Dendritic cell treated with granulocyte-macrophage colony-stimulating factor and Interleukin-4, amounts not matched to agents 40 ng/mL and 50 ng/mL, for 4 days (primary cell): ENCODE measurements at regions of chr21 and their contacts with region 1.

Region 1: GRCh38 chr21:44338971-44339910 is at the start of gene CFAP410:
- H3K4me3 Mint-ChIP-seq: peak within 1 kb of the TSS; percentile 85
- H3K27ac Mint-ChIP-seq: peak within 1 kb of the TSS; percentile 99
- H3K4me1 Mint-ChIP-seq: peaks cover 23% of the 10 kb centered on the region
- H3K27me3 Mint-ChIP-seq: peaks cover 6% of the 10 kb centered on the region

Region 2: DNA sequence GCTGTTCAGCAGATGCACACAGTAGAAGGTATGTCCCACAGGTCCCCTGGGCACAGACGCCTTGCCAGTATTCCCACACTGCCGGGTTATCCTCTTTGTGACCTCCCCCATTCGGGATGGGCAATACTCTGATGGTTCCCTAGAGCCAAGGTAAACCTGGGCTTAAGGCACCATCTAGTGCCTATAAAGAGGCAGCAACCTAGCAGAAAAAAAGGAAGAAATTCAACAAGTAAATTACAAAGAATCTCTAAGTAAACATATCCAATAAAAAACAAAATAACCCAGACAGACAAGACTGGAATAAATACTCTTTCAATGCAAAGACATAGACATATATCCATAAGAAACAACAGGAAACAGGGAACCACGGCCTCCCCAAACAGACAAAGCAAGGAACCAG is 719.4 kb before region 1 on chr21:
- intact Hi-C with region 1: no loop called
- H3K4me3 Mint-ChIP-seq: no peak overlapping the region
- H3K27ac Mint-ChIP-seq: no peak overlapping the region
- H3K4me1 Mint-ChIP-seq: no peaks in the 10 kb centered on the region
- H3K27me3 Mint-ChIP-seq: peaks cover 8% of the 10 kb centered on the region

Region 3: DNA sequence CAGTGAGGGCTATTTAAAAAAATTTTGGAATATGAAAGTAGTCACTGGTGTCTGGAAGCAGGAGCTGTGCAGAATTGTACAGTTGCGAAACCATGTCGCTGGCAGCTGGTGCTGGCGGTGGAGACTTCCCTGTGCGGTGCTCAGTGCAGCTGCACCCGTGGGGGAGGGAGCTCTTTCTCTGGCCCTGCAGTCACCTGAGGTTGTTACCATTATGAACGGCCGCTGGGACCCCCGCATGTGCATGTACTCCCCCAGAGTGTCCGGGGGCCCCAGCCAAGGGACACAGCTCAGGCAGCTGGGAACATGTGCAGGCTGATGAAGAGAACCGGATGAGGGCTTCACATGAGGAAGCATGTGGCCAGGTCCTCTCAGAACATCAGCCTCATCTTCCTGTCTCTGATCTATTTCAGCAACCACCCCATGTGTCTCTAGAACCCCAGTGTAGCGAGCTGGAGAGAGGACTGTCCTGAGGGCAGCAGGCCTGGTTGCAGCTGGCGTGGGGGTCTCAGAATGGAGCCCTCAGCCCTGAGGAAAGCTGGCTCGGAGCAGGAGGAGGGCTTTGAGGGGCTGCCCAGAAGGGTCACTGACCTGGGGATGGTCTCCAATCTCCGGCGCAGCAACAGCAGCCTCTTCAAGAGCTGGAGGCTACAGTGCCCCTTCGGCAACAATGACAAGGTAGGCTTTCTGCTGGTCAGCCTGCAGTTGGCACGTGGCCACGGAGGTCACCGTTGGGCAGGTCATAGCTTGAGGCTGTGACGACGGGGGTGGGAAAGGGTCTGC is 14.1 kb after region 1 on chr21 and contains the start of gene TRPM2:
- intact Hi-C with region 1: loop called (anchors 1 kb)
- H3K4me3 Mint-ChIP-seq: peak within 1 kb of the TSS; percentile 81
- H3K27ac Mint-ChIP-seq: peak within 1 kb of the TSS; percentile 93
- H3K4me1 Mint-ChIP-seq: peaks cover 75% of the 10 kb centered on the region
- H3K27me3 Mint-ChIP-seq: peaks cover 25% of the 10 kb centered on the region

Region 4: GRCh38 chr21:44397431-44398031 is 58.3 kb after region 1 on chr21:
- intact Hi-C with region 1: loop called (anchors 10 kb)
- H3K4me3 Mint-ChIP-seq: no peak overlapping the region
- H3K27ac Mint-ChIP-seq: no peak overlapping the region
- H3K4me1 Mint-ChIP-seq: peaks cover 5% of the 10 kb centered on the region
- H3K27me3 Mint-ChIP-seq: no peaks in the 10 kb centered on the region

Region 5: GRCh38 chr21:44454747-44455523 is 115.7 kb after region 1 on chr21 and contains the start of gene LRRC3:
- intact Hi-C with region 1: loop called (anchors 2 kb)
- H3K4me3 Mint-ChIP-seq: peak within 1 kb of the TSS; percentile 81
- H3K27ac Mint-ChIP-seq: peak within 1 kb of the TSS; percentile 58
- H3K4me1 Mint-ChIP-seq: peaks cover 31% of the 10 kb centered on the region
- H3K27me3 Mint-ChIP-seq: peaks cover 45% of the 10 kb centered on the region